ENCODE measurements at regions of chr1 and their contacts with region 1.

Region 1: GRCh38 chr1:48677306-48678287 is 99.1 kb downstream of the BEND5 start:
- DNase-seq: peak; percentile 41
- ATAC-seq: peak; percentile 85
- H3K4me3 ChIP-seq: no peak overlapping the region
- H3K27ac ChIP-seq: no peak overlapping the region
- H3K4me1 ChIP-seq: no peaks in the 10 kb centered on the region
- H3K27me3 ChIP-seq: no peaks in the 10 kb centered on the region
- CTCF ChIP-seq: peak; percentile 52
- POLR2A ChIP-seq: no peak
- RAD21 ChIP-seq: peak; percentile 36

Region 2: DNA sequence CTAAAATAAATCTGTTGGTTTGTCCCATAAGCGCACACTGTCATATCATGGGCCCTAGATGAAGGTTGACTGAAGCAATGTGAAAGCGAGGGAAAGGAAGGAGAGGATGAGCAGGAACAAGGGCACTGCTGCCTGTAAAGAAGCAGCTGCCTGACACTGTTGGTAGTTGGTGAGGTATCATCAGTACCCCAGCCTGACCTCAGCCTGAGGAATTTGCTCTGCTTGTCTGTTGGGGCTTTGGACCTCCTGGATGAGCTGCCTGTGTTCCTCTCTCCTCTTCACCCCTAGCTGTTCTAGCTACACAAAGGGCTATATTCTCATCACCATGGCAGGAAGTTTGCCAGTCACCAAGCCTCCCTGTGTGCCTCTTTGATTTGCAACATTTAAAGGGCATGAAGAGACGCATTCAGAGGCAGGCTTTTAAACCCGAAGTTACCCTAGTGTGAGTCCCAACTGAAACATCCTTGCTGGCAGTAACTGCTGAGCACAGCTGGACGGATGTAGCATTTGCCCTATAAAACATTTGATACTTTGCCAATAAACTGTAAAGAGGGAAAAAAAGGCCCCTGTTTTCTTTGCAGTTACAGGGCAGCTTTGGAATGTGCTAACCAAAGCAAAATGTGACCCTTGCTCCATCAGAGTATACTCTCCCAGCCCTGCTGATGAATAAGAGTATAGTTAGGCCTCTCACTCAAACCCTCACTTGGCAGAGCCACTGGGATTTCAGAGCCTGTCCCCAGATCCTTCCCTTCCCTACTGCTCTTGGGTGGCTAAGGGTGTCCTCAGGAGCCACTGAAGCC is 183.4 kb before region 1 on chr1:
- CTCF ChIA-PET with region 1: no interaction called
- POLR2A ChIA-PET with region 1: no interaction called
- dilution Hi-C with region 1: no loop called
- in situ Hi-C with region 1: no loop called
- intact Hi-C with region 1: no loop called
- DNase-seq: peak; percentile 94
- ATAC-seq: peak; percentile 91
- H3K4me3 ChIP-seq: no peak overlapping the region
- H3K27ac ChIP-seq: peak overlapping the region; percentile 89
- H3K4me1 ChIP-seq: peaks cover 18% of the 10 kb centered on the region
- H3K27me3 ChIP-seq: no peaks in the 10 kb centered on the region
- CTCF ChIP-seq: no peak
- POLR2A ChIP-seq: no peak
- RAD21 ChIP-seq: no peak

Region 3: DNA sequence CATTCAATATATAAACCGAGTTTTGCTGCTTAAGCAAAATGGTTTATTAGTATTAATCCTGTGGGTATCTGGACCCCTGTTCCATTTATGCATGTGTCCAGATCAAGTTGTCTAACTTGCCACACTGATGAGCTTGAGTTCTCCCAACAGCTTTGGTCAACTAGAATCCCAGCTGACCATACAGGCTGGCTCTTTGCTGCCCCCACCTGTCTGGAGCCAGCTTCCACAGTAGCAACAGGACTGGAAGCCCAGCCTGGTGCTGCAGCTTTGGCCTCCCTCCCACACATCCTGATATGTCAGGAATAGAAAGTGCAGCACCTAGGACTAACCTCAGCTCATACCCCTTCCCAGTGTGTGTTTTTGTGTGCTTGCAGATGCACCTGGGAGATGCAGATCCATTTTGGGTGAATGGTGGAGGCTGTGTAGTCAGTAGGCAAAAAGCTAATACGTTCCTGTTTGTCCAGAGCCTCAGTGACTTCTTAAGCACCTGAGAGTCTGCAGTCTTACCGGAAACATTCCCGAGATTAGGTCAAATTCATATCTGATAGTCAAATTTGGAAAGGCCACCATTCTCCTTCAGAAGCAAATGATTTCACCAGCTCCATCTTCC is 140.0 kb after region 1 on chr1:
- CTCF ChIA-PET with region 1: interaction called, 3 read pairs
- POLR2A ChIA-PET with region 1: no interaction called
- dilution Hi-C with region 1: no loop called
- in situ Hi-C with region 1: loop called (anchors 5 kb)
- intact Hi-C with region 1: loop called (anchors 1 kb)
- DNase-seq: peak; percentile 31
- ATAC-seq: peak; percentile 73
- H3K4me3 ChIP-seq: no peak overlapping the region
- H3K27ac ChIP-seq: no peak overlapping the region
- H3K4me1 ChIP-seq: no peaks in the 10 kb centered on the region
- H3K27me3 ChIP-seq: no peaks in the 10 kb centered on the region
- CTCF ChIP-seq: peak; percentile 56
- POLR2A ChIP-seq: no peak
- RAD21 ChIP-seq: peak; percentile 62

Region 4: GRCh38 chr1:50348449-50349241 is 1671.0 kb after region 1 on chr1:
- CTCF ChIA-PET with region 1: no interaction called
- POLR2A ChIA-PET with region 1: no interaction called
- dilution Hi-C with region 1: no loop called
- in situ Hi-C with region 1: loop called (anchors 10 kb)
- intact Hi-C with region 1: loop called (anchors 1 kb)
- DNase-seq: peak; percentile 77
- ATAC-seq: peak; percentile 97
- H3K4me3 ChIP-seq: no peak overlapping the region
- H3K27ac ChIP-seq: no peak overlapping the region
- H3K4me1 ChIP-seq: no peaks in the 10 kb centered on the region
- H3K27me3 ChIP-seq: no peaks in the 10 kb centered on the region; the same call in 1 of the 2 replicates
- CTCF ChIP-seq: peak; percentile 85
- POLR2A ChIP-seq: no peak
- RAD21 ChIP-seq: peak; percentile 84

Measured in IMR-90 (cell line).